CD4-positive, alpha-beta memory T cell (primary cell): ENCODE measurements at regions of chr19 and their contacts with region 1.

Region 1: GRCh38 chr19:58543826-58544590 is at the start of gene TRIM28:
- DNase-seq: peak; percentile 100
- H3K4me3 ChIP-seq: peak within 1 kb of the TSS; percentile 86 to 87
- H3K4me3 Mint-ChIP-seq: peak within 1 kb of the TSS; percentile 91 to 97 (median 95)
- H3K27ac ChIP-seq: peak within 1 kb of the TSS; percentile 78
- H3K27ac Mint-ChIP-seq: peak within 1 kb of the TSS; percentile 95 to 100 (median 99)
- H3K4me1 ChIP-seq: peaks cover 30% of the 10 kb centered on the region
- H3K4me1 Mint-ChIP-seq: peaks cover 20 to 39% (median 27%) of the 10 kb centered on the region in 4 donors
- H3K27me3 ChIP-seq: no peaks in the 10 kb centered on the region
- H3K27me3 Mint-ChIP-seq: peaks cover 0 to 7% of the 10 kb centered on the region in 2 donors
- total RNA-seq, gene TRIM28: 342 to 348 TPM

Region 2: DNA sequence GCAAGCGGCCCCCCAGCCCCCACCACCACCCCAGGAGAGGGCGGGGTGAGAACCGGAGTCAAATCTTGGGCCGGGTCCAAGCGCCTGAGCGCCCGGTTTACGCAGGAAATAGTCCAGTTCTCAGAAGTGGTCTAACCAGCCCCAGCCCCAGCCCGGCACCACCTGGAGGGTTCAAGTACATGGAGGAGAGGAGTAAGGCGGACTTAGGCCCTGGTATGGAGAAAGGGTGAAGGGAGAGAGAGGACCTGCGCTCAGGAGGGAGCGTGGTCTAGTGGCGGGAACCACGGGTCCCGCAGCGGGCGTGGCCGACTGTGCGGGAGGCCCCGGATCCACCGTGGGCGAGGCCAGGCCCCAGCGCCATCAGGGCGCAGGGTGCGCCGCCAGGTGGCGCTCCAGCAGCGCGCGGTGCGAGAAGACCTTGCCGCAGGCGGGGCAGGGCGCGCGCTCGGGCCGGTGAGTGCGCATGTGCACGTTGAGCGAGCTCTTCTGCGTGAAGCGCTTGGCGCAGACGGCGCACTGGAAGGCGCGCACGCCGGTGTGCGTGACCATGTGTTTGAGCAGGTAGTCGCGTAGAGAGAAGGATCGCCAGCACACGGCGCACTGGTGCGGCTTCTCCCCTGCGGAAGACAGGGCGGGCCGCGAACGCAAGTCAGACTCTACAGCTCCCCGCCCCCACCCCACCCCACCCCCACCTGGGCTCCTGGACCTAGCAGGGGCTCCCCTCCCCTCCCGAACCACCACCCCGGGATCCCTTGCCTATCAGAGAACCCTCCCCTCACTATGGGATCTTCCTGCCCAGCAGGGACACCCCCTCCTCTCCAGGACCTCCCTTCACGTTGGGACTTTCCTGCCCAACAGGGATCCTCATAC is 30.1 kb before region 1 on chr19:
- CTCF ChIA-PET with region 1: interaction called, 13 read pairs
- POLR2A ChIA-PET with region 1: interaction called, 96 read pairs
- intact Hi-C with region 1: loop called (anchors 1 kb)
- DNase-seq: peak; percentile 93 to 95 (median 94)
- H3K4me3 ChIP-seq: peak overlapping the region in 1 of 2 donors; percentile 32
- H3K4me3 Mint-ChIP-seq: peak overlapping the region; percentile 74 to 88 (median 84)
- H3K27ac ChIP-seq: peak overlapping the region; percentile 61
- H3K27ac Mint-ChIP-seq: peak overlapping the region; percentile 82 to 93 (median 91)
- H3K4me1 ChIP-seq: peaks cover 31% of the 10 kb centered on the region
- H3K4me1 Mint-ChIP-seq: peaks cover 11 to 49% (median 29%) of the 10 kb centered on the region in 4 donors
- H3K27me3 ChIP-seq: no peaks in the 10 kb centered on the region
- H3K27me3 Mint-ChIP-seq: no peaks in the 10 kb centered on the region

Region 3: DNA sequence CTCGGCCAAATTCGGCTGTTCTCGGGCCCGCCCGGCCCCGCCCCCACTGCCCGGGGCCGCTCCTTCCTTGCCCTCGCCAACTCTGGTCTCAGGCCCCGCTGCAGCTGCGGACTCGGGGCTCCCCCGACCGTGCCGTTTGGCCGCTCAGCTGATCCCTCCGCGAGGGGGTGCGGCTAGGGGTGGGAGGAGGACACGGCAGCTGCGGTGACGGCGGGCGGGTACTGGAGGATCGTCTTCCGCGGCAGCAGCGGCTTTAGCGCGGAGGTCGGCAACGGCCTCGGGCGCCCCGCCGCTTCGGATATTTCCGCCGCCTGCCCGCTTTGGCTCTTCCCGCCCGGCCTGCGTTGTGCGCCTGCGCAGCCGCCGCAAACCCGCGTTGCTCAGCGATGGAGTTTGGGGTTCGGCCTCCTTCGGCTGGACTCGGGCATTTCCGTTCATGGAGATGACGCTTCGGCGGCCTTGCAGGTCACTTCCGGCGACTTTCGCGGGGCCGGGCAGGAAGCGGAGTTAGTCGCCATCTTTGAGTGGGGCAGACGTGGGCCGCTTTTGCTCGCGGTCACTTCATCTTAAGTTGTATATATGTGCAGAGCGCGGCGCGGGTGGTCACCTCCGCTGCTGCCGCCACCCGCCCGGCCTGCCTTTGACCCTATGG is 14.7 kb after region 1 on chr19:
- CTCF ChIA-PET with region 1: no interaction called
- POLR2A ChIA-PET with region 1: interaction called, 104 read pairs
- intact Hi-C with region 1: loop called (anchors 1 kb)
- DNase-seq: peak; percentile 99 to 100 (median 100)
- H3K4me3 ChIP-seq: peak overlapping the region; percentile 47 to 100
- H3K4me3 Mint-ChIP-seq: peak overlapping the region; percentile 92 to 98 (median 97)
- H3K27ac ChIP-seq: peak overlapping the region; percentile 99
- H3K27ac Mint-ChIP-seq: peak overlapping the region; percentile 97 to 99 (median 99)
- H3K4me1 ChIP-seq: peaks cover 79% of the 10 kb centered on the region
- H3K4me1 Mint-ChIP-seq: peaks cover 28 to 96% (median 61%) of the 10 kb centered on the region in 4 donors
- H3K27me3 ChIP-seq: no peaks in the 10 kb centered on the region
- H3K27me3 Mint-ChIP-seq: no peaks in the 10 kb centered on the region